ENCODE measurements at regions of chr2 and their contacts with region 1.

Region 1: DNA sequence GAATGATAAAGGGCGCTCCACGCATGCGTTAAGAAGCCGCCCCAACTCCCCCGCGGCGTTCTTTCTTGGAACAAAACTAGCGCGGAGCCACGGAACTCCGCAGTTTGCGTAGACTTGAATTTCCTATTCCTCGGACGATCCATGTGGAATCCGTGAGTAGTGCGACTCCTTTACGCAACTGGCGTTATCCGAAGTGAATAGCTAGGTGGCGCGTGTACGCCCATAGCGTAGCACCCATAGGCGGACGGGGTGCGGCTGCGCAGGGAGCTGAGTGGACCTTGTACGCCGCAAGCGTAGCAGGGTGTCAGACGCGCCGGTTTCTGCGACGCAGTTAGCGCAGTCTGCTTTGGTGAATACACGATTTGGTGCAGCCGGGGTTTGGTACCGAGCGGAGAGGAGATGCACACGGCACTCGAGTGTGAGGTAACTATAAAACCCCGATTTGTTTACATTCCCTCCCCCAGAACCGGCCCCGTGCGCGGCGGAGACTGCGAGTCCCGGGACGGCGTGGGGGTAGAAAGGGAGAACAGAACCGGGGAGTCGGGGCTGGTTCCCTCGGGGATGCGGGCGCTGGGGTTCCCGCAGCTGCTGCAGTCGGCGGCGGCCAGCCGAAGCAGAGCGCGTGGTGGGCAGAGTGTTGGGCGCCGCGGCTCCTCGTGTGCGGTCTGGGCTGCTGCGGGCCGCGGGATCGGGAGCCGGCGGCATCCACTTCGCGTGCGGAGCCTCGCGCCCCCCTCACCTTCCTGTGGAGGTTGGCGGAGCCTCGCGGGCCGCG is at the start of gene SLC39A10:
- ATAC-seq: peak; percentile 73 to 93 (median 86)
- H3K4me3 ChIP-seq: peak within 1 kb of the TSS; percentile 78 to 98 (median 86)
- H3K27ac ChIP-seq: peak within 1 kb of the TSS; percentile 90 to 94
- H3K4me1 ChIP-seq: peaks cover 4 to 11% of the 10 kb centered on the region in 2 donors
- total RNA-seq, gene SLC39A10: 31.8 to 58.4 (median 45.3) TPM

Region 2: DNA sequence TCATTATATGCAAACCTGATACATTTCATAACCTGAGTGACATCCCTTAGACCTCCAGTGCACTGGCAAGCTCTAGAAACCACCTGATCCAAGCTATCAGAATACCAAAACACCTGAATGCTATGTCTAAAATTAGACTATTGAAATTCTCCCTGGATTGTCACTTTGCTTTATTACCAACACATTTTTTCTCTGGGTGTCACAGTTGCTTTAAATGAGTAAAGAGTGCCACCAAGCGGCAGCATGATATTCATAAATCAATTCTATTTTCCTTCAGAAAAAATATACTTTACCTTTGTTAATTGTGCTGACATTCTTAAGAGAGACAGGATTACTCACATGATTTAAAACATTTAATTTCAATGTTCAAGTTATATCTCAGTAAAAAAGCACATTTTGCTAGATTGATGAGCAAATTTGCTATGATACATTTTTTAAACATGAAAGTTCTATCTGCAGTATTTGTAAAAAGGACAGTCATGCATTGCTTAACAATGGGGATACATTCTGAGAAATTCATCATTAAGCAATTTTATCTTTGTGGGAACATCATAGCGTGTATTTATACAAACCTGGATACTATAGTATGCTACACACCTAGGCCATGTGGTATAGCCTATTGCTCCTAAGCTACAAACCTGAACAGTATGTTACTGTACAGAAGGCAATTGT is 338.5 kb before region 1 on chr2:
- in situ Hi-C with region 1: loop called in 1 of 9 experiments (anchors 25 kb)
- ATAC-seq: peak; percentile 12 to 60 (median 46)
- H3K4me3 ChIP-seq: no peak overlapping the region
- H3K27ac ChIP-seq: no peak overlapping the region
- H3K4me1 ChIP-seq: peaks cover 2 to 18% of the 10 kb centered on the region in 2 donors

Region 3: DNA sequence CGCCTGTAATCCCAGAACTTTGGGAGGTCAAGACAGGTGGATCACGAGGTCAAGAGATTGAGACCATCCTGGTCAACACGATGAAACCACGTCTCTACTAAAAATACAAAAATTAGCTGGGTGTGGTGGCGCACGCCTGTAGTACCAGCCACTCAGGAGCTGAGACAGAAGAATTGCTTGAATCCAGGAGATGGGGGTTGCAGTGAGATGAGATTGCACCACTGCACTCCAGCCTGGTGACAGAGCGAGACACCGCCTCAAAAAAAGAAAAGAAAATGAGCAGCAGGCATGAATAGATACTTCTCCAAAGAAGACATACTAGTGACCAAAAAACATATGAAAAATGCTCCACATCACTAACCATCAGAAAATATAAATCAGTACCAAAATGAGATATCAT is 273.0 kb after region 1 on chr2:
- in situ Hi-C with region 1: loop called in 2 of 9 experiments (anchors 10 to 25 kb)
- ATAC-seq: no peak
- H3K4me3 ChIP-seq: no peak overlapping the region
- H3K27ac ChIP-seq: no peak overlapping the region
- H3K4me1 ChIP-seq: no peaks in the 10 kb centered on the region

Region 4: GRCh38 chr2:195945061-195945460 is 288.0 kb after region 1 on chr2:
- in situ Hi-C with region 1: loop called in 1 of 9 experiments (anchors 25 kb)
- ATAC-seq: no peak
- H3K4me3 ChIP-seq: no peak overlapping the region
- H3K27ac ChIP-seq: no peak overlapping the region
- H3K4me1 ChIP-seq: no peaks in the 10 kb centered on the region

Region 5: DNA sequence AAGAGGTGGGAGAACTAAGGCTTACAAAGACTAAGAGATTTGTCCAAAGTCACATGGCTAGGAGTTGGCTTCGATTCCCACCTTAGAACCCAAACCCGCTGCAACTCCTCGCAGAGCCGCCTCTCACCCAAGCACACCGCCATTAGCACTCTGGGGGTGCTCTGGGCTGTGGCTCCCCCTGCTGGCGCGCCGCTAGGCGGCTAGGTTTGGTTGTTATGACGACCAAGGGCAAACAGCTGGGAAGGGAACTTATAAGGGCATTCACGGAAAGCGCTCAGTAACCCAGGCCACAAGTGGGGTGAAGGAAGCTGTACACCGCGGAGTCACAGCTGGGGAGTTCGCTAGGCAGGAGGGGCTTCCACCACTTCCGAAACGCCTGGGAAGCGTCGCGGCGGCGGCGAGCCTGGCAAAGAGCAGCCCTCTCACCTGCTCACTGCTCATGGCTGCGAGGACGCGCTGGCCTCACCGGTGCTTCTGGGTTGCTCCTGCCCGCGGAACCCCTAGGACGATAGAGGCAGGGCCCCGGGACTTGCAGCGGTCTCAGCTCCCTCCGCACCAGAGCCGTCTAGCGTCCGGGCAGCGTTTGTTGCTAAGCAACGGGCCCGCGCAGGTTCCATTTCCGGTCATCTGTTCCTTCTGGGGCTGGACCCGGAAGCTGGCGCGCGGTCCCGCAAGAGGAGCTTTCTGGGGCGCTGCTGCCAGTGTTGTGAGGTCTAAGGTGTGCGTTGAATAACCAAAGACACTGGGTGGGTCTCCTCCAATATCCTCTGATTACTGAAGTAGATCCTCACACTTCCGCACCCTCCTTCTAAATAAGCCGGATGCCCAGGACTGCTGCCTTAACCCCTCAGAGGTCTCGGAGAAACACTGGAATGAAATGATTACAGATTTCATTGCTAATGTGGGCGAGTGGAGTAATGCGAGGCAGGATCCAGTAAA is 411.5 kb after region 1 on chr2 and contains the start of gene DNAH7:
- in situ Hi-C with region 1: loop called in 3 of 9 experiments (anchors 10 to 25 kb)
- ATAC-seq: peak; percentile 89 to 97 (median 94)
- H3K4me3 ChIP-seq: peak within 1 kb of the TSS; percentile 51 to 93 (median 63)
- H3K27ac ChIP-seq: peak within 1 kb of the TSS in 1 of 2 donors; percentile 32
- H3K4me1 ChIP-seq: no peaks in the 10 kb centered on the region
- total RNA-seq, gene DNAH7: 0.36 to 15.3 (median 1.5) TPM